Naive thymus-derived CD4-positive, alpha-beta T cell (primary cell): ENCODE measurements at regions of chr17 and their contacts with region 1.

Region 1: DNA sequence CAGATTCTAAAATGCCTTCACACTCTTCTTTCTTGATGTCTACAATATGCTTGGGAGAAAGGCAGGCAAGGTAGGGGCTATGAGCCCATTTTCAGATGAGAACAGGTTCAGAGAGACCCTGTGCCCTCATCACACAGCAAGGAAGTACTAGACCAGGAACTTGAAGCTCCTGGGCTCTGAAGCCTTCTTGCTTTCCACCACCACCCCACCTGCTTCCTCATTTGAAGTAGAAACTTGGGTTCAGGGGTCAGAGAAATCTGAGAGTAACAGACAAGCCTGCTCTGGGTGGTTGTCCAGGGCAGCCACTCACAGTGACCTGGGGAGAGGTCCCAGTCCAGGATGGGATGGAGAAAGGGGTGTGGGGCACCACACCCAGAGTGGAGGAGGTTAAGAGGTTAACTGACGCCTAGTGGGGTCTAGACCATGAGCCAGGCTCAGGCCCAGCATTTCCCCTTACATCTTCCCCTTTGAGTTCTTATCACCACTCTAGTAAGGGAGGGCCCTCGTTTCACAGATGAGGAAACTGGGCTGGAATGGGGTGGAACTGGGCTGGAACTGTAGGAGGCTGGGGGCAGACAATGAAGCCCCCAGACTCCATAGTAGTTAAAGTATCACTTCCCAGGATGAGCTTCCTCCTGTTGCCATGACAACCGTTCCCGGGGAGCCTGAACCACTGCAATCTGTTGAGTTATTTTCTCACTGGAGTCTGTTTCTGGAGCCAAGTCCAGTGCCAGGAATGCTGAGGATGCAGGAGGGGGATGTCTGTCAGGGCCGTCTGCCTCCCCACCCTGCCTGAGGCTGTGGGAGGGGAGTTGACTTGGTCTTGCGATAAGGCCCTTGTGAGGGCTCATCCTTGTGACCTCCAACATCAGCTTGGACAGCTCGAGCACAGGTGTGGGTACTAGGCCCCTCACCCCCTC is 16.2 kb upstream of the PHF12 start:
- DNase-seq: no peak
- ATAC-seq: peak; percentile 71
- H3K4me3 ChIP-seq: no peak overlapping the region
- H3K4me3 Mint-ChIP-seq: no peak overlapping the region
- H3K27ac ChIP-seq: no peak overlapping the region
- H3K27ac Mint-ChIP-seq: peak overlapping the region in 1 of 9 donors; percentile 14
- H3K4me1 ChIP-seq: no peaks in the 10 kb centered on the region
- H3K4me1 Mint-ChIP-seq: peaks cover 0 to 6% (median 0%) of the 10 kb centered on the region in 7 donors
- H3K27me3 ChIP-seq: no peaks in the 10 kb centered on the region
- H3K27me3 Mint-ChIP-seq: peaks cover 4 to 11% (median 9%) of the 10 kb centered on the region in 5 donors

Region 2: DNA sequence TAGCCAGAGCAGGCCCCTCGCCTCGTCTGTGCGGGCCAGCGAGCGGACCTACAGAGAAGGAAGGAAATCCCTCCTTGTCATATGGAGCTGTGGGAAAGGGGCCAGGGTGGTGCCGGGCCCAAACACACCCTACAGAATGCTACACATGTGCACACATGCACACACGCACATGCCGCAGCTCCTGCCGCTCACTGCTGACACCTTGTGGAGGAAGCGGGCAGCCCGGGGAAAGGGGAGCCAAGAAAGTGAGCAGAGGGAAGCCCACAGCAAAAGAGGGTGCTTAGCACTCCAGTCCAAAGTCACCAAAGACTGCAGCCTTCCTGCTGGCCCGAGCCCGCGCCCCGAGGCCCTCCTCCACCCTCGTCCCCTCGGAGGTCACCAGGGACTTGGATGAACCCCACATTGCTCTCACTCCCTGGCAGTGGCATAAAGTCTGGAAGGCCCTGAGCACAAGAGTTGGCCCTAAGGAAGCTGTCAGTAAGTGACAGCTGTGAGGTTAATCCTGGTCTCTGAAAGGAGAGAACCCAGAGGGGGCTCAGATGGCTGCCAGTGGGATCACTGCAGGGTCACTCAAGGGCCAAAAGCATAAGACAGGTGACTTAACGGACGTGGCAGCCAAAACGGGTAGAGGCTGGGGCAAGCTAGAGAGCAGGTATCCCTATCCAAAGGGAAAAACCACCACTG is 144.5 kb after region 1 on chr17:
- CTCF ChIA-PET with region 1: interaction called, 95 read pairs
- POLR2A ChIA-PET with region 1: interaction called, 6 read pairs
- intact Hi-C with region 1: loop called (anchors 1 kb)
- DNase-seq: peak; percentile 33 to 77 (median 58)
- ATAC-seq: peak; percentile 75
- H3K4me3 ChIP-seq: no peak overlapping the region
- H3K4me3 Mint-ChIP-seq: no peak overlapping the region
- H3K27ac ChIP-seq: no peak overlapping the region
- H3K27ac Mint-ChIP-seq: no peak overlapping the region
- H3K4me1 ChIP-seq: no peaks in the 10 kb centered on the region
- H3K4me1 Mint-ChIP-seq: peaks cover 0 to 10% (median 5%) of the 10 kb centered on the region in 7 donors
- H3K27me3 ChIP-seq: no peaks in the 10 kb centered on the region
- H3K27me3 Mint-ChIP-seq: no peaks in the 10 kb centered on the region

Region 3: DNA sequence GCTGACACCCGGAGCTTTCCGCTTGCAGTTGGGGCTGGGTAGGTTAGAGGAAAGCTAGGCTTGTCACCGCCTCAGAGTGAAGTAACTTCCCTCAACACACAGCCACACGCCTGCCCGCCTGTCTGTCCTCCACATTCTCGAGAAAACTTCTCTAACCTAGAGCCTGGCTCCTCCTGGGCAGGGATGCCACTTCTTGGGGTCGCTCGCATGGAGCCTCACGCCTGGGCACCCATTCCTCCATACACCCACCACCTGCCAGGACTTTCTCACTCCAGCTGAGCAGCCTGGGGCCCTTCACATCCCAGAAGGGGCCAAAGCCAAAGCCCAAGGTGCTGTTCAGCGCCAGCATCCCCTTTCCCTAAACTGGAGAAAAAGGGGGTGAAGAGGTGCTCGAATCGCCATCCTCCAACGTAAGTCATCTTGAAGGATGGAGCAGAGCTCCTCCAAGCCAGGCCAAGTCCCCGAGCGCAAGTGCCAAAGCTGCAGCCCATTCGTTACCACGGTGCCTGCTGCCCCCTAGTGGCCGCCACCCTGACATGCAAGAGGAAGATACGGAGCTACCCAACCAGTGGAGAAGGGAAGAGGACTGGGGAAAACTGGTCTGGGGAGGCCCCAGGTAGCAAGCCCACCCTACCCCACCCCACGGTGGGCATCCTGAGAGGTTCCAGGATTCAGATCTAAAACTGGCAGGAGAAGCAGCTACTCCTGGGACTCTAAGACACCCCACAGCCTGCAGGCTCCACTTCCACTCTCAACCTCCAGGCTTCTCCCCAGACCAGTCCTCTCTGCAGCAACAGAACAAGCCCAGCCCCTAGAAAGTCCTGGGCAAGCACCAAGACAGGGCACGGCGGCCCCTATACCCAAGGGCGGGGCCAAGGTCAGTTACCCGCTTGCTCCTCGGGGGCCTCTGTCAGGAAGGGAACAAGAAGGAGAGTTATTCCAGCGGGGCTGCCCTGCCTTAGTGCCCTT is 149.6 kb after region 1 on chr17:
- CTCF ChIA-PET with region 1: interaction called, 95 read pairs
- POLR2A ChIA-PET with region 1: interaction called, 6 read pairs
- intact Hi-C with region 1: loop called (anchors 1 kb)
- DNase-seq: peak; percentile 49 to 81 (median 69)
- ATAC-seq: peak; percentile 89
- H3K4me3 ChIP-seq: no peak overlapping the region
- H3K4me3 Mint-ChIP-seq: peak overlapping the region in 1 of 10 donors; percentile 44
- H3K27ac ChIP-seq: no peak overlapping the region
- H3K27ac Mint-ChIP-seq: peak overlapping the region in 5 of 9 donors; percentile 54 to 74 (median 61)
- H3K4me1 ChIP-seq: no peaks in the 10 kb centered on the region
- H3K4me1 Mint-ChIP-seq: peaks cover 0 to 11% (median 5%) of the 10 kb centered on the region in 7 donors
- H3K27me3 ChIP-seq: no peaks in the 10 kb centered on the region
- H3K27me3 Mint-ChIP-seq: no peaks in the 10 kb centered on the region

Region 4: GRCh38 chr17:29331708-29332085 is 364.2 kb after region 1 on chr17:
- CTCF ChIA-PET with region 1: no interaction called
- POLR2A ChIA-PET with region 1: no interaction called
- intact Hi-C with region 1: no loop called
- DNase-seq: no peak
- ATAC-seq: no peak
- H3K4me3 ChIP-seq: no peak overlapping the region
- H3K4me3 Mint-ChIP-seq: no peak overlapping the region
- H3K27ac ChIP-seq: no peak overlapping the region
- H3K27ac Mint-ChIP-seq: no peak overlapping the region
- H3K4me1 ChIP-seq: no peaks in the 10 kb centered on the region
- H3K4me1 Mint-ChIP-seq: peaks cover 0 to 4% (median 0%) of the 10 kb centered on the region in 7 donors
- H3K27me3 ChIP-seq: no peaks in the 10 kb centered on the region
- H3K27me3 Mint-ChIP-seq: no peaks in the 10 kb centered on the region